ENCODE measurements at regions of chr1 and their contacts with region 1.

Region 1: DNA sequence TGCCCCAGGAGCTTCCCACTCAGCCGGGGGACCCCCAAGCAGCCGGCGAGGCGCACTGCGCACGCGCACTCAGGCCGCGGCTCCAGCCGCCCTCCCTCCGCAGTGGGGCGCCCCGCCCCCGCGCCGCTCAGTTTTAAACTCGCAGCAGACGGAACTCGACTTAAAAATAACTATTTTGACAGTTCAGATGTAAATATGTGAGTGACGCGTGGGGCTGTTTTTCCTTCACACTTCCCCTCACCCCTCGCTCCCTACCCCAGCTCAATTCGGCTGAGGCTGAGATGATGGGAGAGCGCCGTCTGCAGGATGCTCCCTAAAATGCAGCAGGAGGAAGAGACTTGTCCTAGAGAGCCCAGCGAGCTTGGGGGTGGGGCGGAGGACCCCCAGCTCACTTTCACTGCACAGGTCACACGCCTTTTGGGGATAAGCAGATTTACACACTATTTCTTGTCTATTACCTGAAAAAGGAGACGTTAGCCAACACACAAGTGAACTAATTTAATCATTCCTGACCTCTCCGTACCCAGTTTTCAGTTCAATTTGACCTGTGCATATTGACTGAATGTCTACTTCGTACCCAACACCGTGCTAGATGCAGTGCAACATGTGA is 8.9 kb upstream of the LEMD1 start:
- DNase-seq: peak; percentile 63
- H3K27ac ChIP-seq: no peak overlapping the region; the same call in 1 of the 2 replicates
- CTCF ChIP-seq: peak; percentile 92

Region 2: GRCh38 chr1:205354259-205354904 is 76.4 kb before region 1 on chr1:
- CTCF ChIA-PET with region 1: interaction called, 14 read pairs
- POLR2A ChIA-PET with region 1: no interaction called
- DNase-seq: peak; percentile 50
- H3K27ac ChIP-seq: no peak overlapping the region
- CTCF ChIP-seq: peak; percentile 90

Region 3: GRCh38 chr1:205365945-205366463 is 64.8 kb before region 1 on chr1:
- CTCF ChIA-PET with region 1: interaction called, 11 read pairs
- POLR2A ChIA-PET with region 1: no interaction called
- DNase-seq: no peak
- H3K27ac ChIP-seq: no peak overlapping the region
- CTCF ChIP-seq: no peak

Region 4: DNA sequence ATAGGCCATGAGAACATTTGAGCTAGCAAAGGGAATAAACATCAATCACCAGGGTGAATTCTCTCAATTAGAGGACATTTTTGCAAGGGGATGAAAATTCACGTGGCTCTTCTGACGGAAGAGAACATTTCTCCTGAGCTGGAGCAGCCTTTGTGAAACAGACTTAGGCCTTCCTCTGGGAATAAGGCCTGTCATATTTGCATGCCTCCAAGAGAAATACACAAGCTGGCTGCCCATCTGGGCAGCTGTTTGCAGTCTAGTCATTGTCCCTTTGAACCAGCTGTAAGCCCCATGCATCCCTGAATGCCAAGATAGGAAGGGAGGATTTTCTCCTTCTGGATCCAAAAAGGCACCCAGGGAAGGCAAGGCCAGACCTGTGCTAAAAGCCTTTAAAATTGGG is 14.5 kb before region 1 on chr1:
- CTCF ChIA-PET with region 1: interaction called, 16 read pairs
- POLR2A ChIA-PET with region 1: no interaction called
- DNase-seq: no peak
- H3K27ac ChIP-seq: no peak overlapping the region
- CTCF ChIP-seq: no peak

Region 5: GRCh38 chr1:205449750-205450443 is 19.1 kb after region 1 on chr1:
- CTCF ChIA-PET with region 1: interaction called, 15 read pairs
- POLR2A ChIA-PET with region 1: no interaction called
- DNase-seq: peak; percentile 99
- H3K27ac ChIP-seq: peak overlapping the region; percentile 96
- CTCF ChIP-seq: no peak

Region 6: DNA sequence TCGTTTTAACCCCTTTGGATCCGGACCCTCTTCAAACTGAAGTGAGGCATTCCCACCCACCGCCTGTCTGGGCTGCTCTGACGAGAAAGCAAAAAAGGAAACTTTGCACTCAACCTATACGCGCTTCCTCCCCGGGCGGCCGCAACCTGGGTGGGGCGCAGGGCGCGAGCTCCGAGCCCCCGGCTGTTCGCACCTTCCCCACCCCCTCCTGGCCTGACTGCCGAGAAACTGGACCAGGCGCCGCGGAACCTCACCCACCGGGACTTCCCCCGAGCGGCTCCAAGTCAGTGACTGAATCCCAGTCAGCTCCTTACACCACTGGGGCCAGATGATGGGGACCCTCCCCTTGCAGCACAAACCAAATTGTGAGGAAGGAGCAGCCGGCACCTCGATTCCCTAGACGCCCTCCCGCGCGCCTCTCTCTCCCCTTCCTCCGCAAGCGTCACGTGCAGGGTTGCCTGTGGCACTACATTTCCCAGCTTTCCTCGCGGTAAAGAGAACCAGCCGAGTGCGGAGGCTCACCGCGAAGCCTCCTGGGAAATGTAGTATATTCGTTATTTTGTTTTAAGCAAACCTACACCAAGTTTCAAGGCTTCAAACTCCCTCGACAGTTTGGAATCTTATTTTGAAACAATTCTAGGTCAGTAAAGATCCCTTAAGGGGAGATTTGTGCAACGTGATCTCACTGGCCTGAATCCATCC is 344.4 kb after region 1 on chr1 and contains the start of gene RAB29:
- CTCF ChIA-PET with region 1: no interaction called
- POLR2A ChIA-PET with region 1: no interaction called
- DNase-seq: peak; percentile 86
- H3K27ac ChIP-seq: peak within 1 kb of the TSS; percentile 77
- CTCF ChIP-seq: no peak

Measured in RWPE1 (cell line).